HepG2 (cell line): ENCODE measurements at regions of chr2 and their contacts with region 1.

Region 1: GRCh38 chr2:15577071-15577735 is 14.5 kb upstream of the DDX1 start:
- DNase-seq: peak; percentile 85
- ATAC-seq: peak; percentile 92
- H3K4me3 ChIP-seq: no peak overlapping the region
- H3K27ac ChIP-seq: no peak overlapping the region
- H3K4me1 ChIP-seq: peaks cover 68% of the 10 kb centered on the region
- H3K27me3 ChIP-seq: no peaks in the 10 kb centered on the region
- CTCF ChIP-seq: peak; percentile 95
- EP300 ChIP-seq: no peak
- POLR2A ChIP-seq: no peak
- RAD21 ChIP-seq: peak; percentile 77

Region 2: DNA sequence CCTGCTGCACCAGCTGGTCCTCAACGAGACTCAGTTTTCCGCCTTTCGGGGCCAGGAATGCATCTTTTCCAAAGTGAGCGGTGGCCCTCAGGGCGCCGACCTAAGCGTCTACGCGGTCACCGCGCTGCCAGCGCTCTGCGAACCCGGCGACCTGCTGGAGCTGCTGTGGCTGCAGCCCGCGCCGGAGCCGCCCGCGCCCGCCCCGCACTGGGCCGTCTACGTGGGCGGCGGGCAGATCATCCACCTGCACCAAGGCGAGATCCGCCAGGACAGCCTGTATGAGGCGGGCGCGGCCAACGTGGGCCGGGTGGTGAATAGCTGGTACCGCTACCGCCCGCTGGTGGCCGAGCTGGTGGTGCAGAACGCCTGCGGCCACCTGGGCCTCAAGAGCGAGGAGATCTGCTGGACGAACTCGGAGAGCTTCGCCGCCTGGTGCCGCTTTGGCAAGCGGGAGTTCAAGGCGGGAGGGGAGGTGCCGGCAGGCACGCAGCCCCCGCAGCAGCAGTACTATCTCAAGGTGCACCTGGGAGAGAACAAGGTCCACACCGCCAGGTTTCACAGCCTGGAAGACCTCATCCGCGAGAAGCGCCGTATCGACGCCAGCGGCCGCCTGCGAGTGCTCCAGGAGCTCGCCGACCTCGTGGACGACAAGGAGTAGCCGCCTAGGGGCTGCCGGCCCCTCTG is 942.9 kb before region 1 on chr2:
- CTCF ChIA-PET with region 1: no interaction called
- POLR2A ChIA-PET with region 1: no interaction called
- in situ Hi-C with region 1: loop called (anchors 25 kb)
- intact Hi-C with region 1: no loop called
- DNase-seq: peak; percentile 11
- ATAC-seq: peak; percentile 74
- H3K4me3 ChIP-seq: peak overlapping the region in 1 of 3 experiments; percentile 1; a peak in 2 of 6 replicates
- H3K27ac ChIP-seq: no peak overlapping the region
- H3K4me1 ChIP-seq: peaks cover 16% of the 10 kb centered on the region
- H3K27me3 ChIP-seq: peaks cover 13 to 41% of the 10 kb centered on the region in 2 experiments
- CTCF ChIP-seq: peak; percentile 72
- EP300 ChIP-seq: no peak
- POLR2A ChIP-seq: no peak
- RAD21 ChIP-seq: 0 out of 2 replicates have a peak, but pooled peaks have one; percentile 22

Region 3: GRCh38 chr2:15006667-15007066 is 570.5 kb before region 1 on chr2:
- CTCF ChIA-PET with region 1: no interaction called
- POLR2A ChIA-PET with region 1: no interaction called
- in situ Hi-C with region 1: loop called (anchors 25 kb)
- intact Hi-C with region 1: no loop called
- DNase-seq: no peak
- ATAC-seq: no peak
- H3K4me3 ChIP-seq: no peak overlapping the region
- H3K27ac ChIP-seq: no peak overlapping the region
- H3K4me1 ChIP-seq: no peaks in the 10 kb centered on the region
- H3K27me3 ChIP-seq: 0 out of 5 replicates have a peak, but pooled peaks cover 0 to 5% of the 10 kb centered on the region in 2 experiments
- CTCF ChIP-seq: no peak
- EP300 ChIP-seq: no peak
- POLR2A ChIP-seq: no peak
- RAD21 ChIP-seq: no peak

Region 4: DNA sequence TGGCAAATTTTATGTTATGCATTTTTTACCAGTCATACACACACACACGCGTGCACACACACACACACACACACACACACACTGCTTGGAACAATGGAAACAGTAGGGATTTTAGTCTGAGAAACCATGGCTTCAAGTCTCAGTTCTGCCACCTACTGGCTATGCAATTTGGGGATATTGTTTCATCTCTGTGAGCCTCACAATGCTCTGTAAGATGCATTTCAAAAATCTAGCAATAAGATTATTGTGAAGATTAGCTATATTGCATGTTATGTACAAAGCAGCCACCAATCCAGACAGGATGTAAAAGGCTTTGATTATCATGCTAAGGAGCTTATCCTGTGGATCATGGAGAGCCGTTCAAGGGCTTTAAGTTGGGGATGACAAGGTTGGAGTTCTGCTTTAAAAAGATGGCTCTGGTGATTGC is 417.4 kb before region 1 on chr2:
- CTCF ChIA-PET with region 1: no interaction called
- POLR2A ChIA-PET with region 1: no interaction called
- in situ Hi-C with region 1: no loop called
- intact Hi-C with region 1: loop called (anchors 5 kb)
- DNase-seq: peak; percentile 49
- ATAC-seq: peak; percentile 55
- H3K4me3 ChIP-seq: no peak overlapping the region
- H3K27ac ChIP-seq: no peak overlapping the region
- H3K4me1 ChIP-seq: peaks cover 28% of the 10 kb centered on the region
- H3K27me3 ChIP-seq: no peaks in the 10 kb centered on the region
- CTCF ChIP-seq: peak; percentile 64
- EP300 ChIP-seq: no peak
- POLR2A ChIP-seq: no peak
- RAD21 ChIP-seq: peak; percentile 42; the same call in 1 of the 2 replicates

Region 5: DNA sequence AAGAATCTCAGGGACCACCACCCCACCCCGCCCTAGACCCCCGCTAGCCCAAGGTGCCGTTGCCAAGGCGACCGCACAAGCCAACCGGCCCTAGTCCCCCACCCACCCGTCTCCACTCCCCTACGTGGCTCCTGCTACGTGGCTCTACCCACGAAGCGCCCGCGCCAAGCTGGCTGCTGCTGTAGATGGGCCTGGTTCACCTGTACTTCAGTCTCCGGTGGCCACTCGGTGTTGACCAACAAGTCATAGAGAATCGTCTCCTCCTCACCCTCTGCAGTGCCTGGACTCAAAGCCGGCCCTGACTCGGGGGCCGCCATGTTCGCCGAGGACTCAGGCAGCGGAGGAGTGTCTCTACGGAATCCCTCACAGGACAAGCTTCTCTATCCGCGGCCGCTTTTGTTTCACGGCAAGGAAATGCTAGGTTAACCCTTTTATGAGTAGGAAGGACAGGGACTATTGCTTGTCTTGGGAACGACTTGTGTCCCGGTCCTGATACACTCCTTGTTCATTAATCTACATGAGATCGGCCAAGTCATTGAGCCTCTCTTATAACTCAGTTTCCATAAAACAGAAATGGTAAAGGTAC is 16.1 kb before region 1 on chr2 and contains the start of gene NBAS:
- CTCF ChIA-PET with region 1: no interaction called
- POLR2A ChIA-PET with region 1: interaction called, 7 read pairs
- in situ Hi-C with region 1: no loop called
- intact Hi-C with region 1: loop called (anchors 1 kb)
- DNase-seq: peak; percentile 85
- ATAC-seq: peak; percentile 89
- H3K4me3 ChIP-seq: peak within 1 kb of the TSS; percentile 92 to 95 (median 93)
- H3K27ac ChIP-seq: peak within 1 kb of the TSS; percentile 70
- H3K4me1 ChIP-seq: peaks cover 46% of the 10 kb centered on the region
- H3K27me3 ChIP-seq: peaks cover 0 to 9% of the 10 kb centered on the region in 2 experiments; a peak in 2 of 5 replicates
- CTCF ChIP-seq: no peak
- EP300 ChIP-seq: peak; percentile 29 to 52; a peak in 1 of 4 replicates
- POLR2A ChIP-seq: peak; percentile 80 to 88
- RAD21 ChIP-seq: no peak; the same call in 1 of the 2 replicates
- total RNA-seq, gene NBAS: 58.7 and 61.4 TPM in 2 replicates